A549 (cell line): ENCODE measurements at regions of chr19 and their contacts with region 1.

Region 1: GRCh38 chr19:39150845-39151600 is 25.4 kb downstream of the PAK4 start:
- DNase-seq: no peak
- ATAC-seq: no peak
- H3K4me3 ChIP-seq: no peak overlapping the region
- H3K27ac ChIP-seq: no peak overlapping the region
- H3K4me1 ChIP-seq: peaks cover 16% of the 10 kb centered on the region
- CTCF ChIP-seq: no peak
- EP300 ChIP-seq: no peak
- POLR2A ChIP-seq: no peak
- RAD21 ChIP-seq: no peak

Region 2: GRCh38 chr19:39097299-39097698 is 53.7 kb before region 1 on chr19:
- CTCF ChIA-PET with region 1: no interaction called
- POLR2A ChIA-PET with region 1: no interaction called
- DNase-seq: no peak
- ATAC-seq: no peak
- H3K4me3 ChIP-seq: no peak overlapping the region
- H3K27ac ChIP-seq: no peak overlapping the region
- H3K4me1 ChIP-seq: peaks cover 11% of the 10 kb centered on the region; the same call in 2 of the 3 replicates
- CTCF ChIP-seq: no peak
- EP300 ChIP-seq: no peak
- POLR2A ChIP-seq: no peak
- RAD21 ChIP-seq: no peak

Region 3: DNA sequence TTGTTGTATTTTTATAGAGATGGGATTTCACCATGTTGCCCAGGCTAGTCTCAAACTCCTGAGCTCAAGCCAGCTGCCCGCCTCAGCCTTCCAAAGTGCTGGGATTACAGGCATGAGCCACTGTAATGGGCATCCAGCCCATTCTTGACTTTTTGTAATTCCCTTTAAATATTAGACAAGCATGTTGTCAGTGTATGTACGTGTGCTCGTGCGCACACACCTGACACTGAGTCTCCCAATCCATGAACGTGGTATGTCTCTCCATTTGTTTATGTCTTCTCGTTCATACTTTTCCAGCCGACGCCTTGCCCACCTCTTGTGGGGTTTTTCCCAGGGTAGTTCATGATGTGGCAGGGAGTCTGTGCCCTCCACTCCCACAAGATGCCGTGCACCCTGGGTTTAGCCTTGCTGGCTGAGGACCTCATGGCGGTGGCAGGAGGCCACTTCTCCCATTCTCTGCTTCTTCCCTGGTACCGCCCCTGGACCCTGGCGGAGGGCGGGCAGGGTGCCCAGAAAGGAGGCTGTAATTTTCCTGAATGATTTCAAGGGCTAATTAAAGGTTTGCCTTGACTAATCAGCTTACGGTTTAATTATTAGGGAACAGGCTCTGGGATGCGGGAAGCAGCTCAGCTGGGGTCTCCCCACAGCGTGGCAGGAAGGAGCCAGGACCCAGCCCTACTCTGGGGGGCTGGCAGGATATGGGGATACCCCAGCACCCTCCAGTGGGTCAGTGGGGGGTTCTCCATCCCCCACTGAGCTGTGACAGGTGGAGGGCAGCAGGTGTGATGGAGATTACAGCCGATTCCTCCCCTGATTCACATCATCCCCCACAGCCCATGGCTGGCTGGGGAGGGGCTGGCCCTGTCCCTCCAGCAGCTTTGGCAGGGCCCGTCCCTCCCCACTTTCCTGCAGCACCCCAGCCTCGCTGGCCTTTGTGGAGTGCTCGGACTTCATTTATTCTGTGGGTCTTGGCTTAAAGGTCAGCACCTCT is 12.5 kb before region 1 on chr19:
- CTCF ChIA-PET with region 1: interaction called, 19 read pairs
- POLR2A ChIA-PET with region 1: interaction called, 10 read pairs
- DNase-seq: no peak
- ATAC-seq: no peak
- H3K4me3 ChIP-seq: no peak overlapping the region
- H3K27ac ChIP-seq: peak overlapping the region in 1 of 2 experiments; percentile 64; a peak in 3 of 6 replicates
- H3K4me1 ChIP-seq: peaks cover 52% of the 10 kb centered on the region
- CTCF ChIP-seq: no peak
- EP300 ChIP-seq: no peak
- POLR2A ChIP-seq: no peak
- RAD21 ChIP-seq: no peak

Region 4: GRCh38 chr19:39166571-39167391 is 15.8 kb after region 1 on chr19:
- CTCF ChIA-PET with region 1: interaction called, 14 read pairs
- POLR2A ChIA-PET with region 1: no interaction called
- DNase-seq: no peak
- ATAC-seq: peak; percentile 17 to 37; a peak in 4 of 6 replicates
- H3K4me3 ChIP-seq: no peak overlapping the region
- H3K27ac ChIP-seq: peak overlapping the region in 1 of 2 experiments; percentile 22; a peak in 2 of 6 replicates
- H3K4me1 ChIP-seq: peaks cover 15% of the 10 kb centered on the region
- CTCF ChIP-seq: no peak
- EP300 ChIP-seq: no peak
- POLR2A ChIP-seq: no peak
- RAD21 ChIP-seq: no peak

Region 5: GRCh38 chr19:39224910-39225309 is 73.9 kb after region 1 on chr19:
- CTCF ChIA-PET with region 1: no interaction called
- POLR2A ChIA-PET with region 1: no interaction called
- DNase-seq: peak in 1 of 2 experiments; percentile 49
- ATAC-seq: peak in 1 of 2 experiments; percentile 14; a peak in 1 of 6 replicates
- H3K4me3 ChIP-seq: no peak overlapping the region
- H3K27ac ChIP-seq: no peak overlapping the region
- H3K4me1 ChIP-seq: no peaks in the 10 kb centered on the region
- CTCF ChIP-seq: no peak
- EP300 ChIP-seq: no peak
- POLR2A ChIP-seq: no peak
- RAD21 ChIP-seq: 0 out of 5 replicates have a peak, but pooled peaks of 1 of the 2 experiments have one; percentile 8

Region 6: DNA sequence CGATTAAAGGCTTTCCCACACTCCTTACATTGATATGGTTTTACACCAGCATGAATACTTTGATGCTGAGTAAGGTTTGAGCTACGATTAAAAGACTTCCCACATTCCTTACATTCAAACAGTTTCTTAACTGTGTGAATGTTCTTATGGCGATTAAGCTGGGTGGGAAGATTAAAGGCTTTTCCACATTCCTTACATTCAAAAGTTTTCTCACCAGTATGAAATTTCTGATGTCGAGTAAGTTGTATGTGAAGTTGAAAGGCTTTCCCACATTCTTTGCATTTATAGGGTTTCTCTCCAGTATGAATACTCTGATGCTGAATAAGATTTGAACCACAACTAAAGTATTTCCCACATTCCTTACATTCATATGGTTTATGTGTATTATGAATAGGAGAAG is 885.0 kb after region 1 on chr19:
- CTCF ChIA-PET with region 1: no interaction called
- POLR2A ChIA-PET with region 1: no interaction called
- DNase-seq: no peak
- ATAC-seq: no peak
- H3K4me3 ChIP-seq: no peak overlapping the region
- H3K27ac ChIP-seq: no peak overlapping the region
- H3K4me1 ChIP-seq: no peaks in the 10 kb centered on the region
- CTCF ChIP-seq: no peak
- EP300 ChIP-seq: no peak
- POLR2A ChIP-seq: no peak
- RAD21 ChIP-seq: no peak